ENCODE measurements at regions of chr14 and their contacts with region 1.

Region 1: DNA sequence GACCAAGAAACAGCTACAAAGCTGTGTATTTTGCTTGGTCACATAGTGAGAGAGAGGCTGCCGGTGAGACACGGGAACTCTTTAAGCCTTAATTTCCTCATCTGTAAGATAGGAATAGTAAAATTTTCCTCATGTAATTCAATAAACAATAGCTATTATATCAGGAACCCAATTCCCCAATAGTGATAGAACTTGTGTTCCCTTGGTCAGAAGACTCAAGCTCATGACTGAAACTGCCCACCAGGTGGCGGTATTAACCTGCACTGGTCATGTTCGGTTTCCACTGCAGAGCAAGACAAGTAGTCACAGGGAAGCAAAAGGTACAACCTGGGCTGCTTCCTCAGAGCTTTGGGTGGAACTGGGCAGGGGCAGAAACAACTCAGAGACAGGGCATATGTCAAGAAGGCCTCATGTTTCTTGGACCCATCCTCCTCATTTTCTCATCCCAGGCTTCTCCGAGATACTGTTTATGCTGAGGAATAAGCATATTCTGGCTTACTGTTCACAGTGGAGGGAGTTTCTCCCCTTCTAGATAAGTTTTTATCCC is 4.2 kb upstream of the AJUBA start:
- DNase-seq: peak; percentile 75
- H3K4me3 ChIP-seq: no peak overlapping the region
- H3K27ac ChIP-seq: no peak overlapping the region
- H3K27me3 ChIP-seq: no peaks in the 10 kb centered on the region
- CTCF ChIP-seq: peak; percentile 90

Region 2: GRCh38 chr14:22519877-22520685 is 466.5 kb before region 1 on chr14:
- CTCF ChIA-PET with region 1: no interaction called
- POLR2A ChIA-PET with region 1: no interaction called
- DNase-seq: peak; percentile 45
- H3K4me3 ChIP-seq: peak overlapping the region; percentile 10; the same call in 1 of the 2 replicates
- H3K27ac ChIP-seq: peak overlapping the region; percentile 52
- H3K27me3 ChIP-seq: no peaks in the 10 kb centered on the region
- CTCF ChIP-seq: no peak

Region 3: DNA sequence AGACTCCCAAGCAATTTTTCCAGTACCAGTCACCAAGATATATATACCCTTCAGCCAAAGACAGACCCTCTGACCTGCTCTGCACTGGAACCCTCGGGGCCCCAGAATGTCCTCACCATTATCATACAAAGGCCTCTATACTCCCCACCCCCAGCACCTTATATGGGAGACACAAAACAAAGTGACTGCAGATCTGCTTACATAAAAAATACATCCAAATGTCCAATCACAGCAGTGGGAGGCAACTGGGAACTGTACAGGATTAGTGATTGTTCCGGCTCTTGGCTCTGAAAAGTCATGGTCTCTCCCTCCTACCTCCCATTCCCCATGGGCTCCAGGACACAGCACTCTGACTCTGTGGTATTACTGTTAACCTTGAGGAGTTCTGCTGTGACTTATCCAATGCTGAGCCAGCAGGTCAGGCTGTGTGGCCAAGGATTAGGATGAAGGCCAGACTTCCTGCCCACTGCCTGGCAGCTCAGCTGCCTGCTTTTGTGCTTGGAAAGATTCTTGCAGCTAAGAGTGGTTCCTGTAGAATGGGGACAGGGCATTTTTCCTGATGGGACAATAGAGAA is 206.4 kb before region 1 on chr14:
- CTCF ChIA-PET with region 1: no interaction called
- POLR2A ChIA-PET with region 1: no interaction called
- DNase-seq: no peak
- H3K4me3 ChIP-seq: no peak overlapping the region
- H3K27ac ChIP-seq: no peak overlapping the region
- H3K27me3 ChIP-seq: no peaks in the 10 kb centered on the region
- CTCF ChIP-seq: no peak

Region 4: GRCh38 chr14:22955702-22956569 is 30.6 kb before region 1 on chr14:
- CTCF ChIA-PET with region 1: interaction called, 25 read pairs
- POLR2A ChIA-PET with region 1: interaction called, 3 read pairs
- DNase-seq: no peak
- H3K4me3 ChIP-seq: peak overlapping the region; percentile 66
- H3K27ac ChIP-seq: peak overlapping the region; percentile 68
- H3K27me3 ChIP-seq: no peaks in the 10 kb centered on the region
- CTCF ChIP-seq: no peak

Region 5: GRCh38 chr14:22973217-22974032 is 13.2 kb before region 1 on chr14:
- CTCF ChIA-PET with region 1: interaction called, 181 read pairs
- POLR2A ChIA-PET with region 1: interaction called, 6 read pairs
- DNase-seq: no peak
- H3K4me3 ChIP-seq: no peak overlapping the region
- H3K27ac ChIP-seq: no peak overlapping the region
- H3K27me3 ChIP-seq: no peaks in the 10 kb centered on the region
- CTCF ChIP-seq: peak; percentile 68

Region 6: DNA sequence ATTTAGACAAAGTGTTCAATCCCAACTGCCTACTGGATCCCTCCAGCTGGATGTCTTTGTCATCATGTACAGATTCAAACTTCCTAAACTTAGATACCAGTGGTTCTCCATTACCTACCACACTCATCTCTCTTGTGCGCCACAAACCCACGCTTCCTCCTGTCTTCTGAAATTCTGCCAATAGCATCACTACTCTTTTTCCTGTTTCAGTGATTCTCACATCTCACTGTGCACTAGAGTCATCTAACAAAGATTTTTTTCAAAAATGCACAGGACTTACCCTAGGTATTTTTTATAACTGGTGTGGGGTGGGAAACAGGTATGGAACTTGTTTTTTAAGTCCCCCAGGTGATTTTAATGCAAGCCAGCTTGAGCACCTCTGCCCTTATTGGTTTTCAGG is 42.2 kb after region 1 on chr14:
- CTCF ChIA-PET with region 1: interaction called, 19 read pairs
- POLR2A ChIA-PET with region 1: no interaction called
- DNase-seq: no peak
- H3K4me3 ChIP-seq: no peak overlapping the region
- H3K27ac ChIP-seq: no peak overlapping the region
- H3K27me3 ChIP-seq: no peaks in the 10 kb centered on the region
- CTCF ChIP-seq: no peak

Region 7: DNA sequence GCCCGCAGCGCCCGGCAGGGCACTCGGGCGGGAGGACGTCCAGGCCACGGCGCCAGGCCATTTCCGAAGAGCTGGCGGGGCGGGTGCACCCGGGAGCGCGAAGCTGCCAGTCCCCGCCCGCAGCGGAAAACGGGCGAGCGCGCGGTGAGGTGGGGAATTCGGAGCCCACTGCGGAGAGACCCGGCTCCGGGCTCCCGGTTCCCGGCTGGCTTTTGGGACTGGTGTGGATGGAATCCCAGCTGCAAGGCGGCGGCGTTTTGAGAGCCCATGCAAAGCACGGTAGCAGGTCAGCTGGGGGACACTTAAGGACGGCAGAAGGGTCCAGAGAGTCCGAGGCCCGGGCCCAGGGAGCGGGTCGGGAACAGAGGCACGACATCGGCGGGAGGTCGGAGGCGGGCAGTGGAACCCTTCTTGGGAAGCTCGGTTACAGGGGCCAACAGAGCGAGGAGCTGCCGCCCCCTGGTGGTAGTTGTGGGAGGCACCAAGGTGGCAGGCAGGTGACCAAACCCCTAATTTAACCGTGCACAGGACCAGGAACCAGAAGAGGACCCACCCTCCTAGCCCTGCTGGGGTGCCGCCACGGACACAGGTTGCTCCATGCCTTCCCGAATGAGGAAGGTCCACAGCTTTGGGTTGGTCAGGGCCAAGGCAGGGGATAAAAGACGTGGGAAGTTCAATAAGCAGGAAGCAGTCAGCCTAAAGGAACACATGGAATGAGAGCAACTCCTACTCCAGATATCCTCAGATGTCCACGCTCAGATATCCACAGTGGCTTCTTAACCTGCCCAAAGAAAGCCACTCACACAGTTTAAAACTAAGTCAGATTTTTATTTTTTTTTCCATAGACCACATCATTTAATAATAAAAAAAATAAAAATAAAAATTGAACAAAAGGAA is 71.4 kb after region 1 on chr14:
- CTCF ChIA-PET with region 1: interaction called, 262 read pairs
- POLR2A ChIA-PET with region 1: interaction called, 17 read pairs
- DNase-seq: peak; percentile 45
- H3K4me3 ChIP-seq: peak overlapping the region; percentile 61
- H3K27ac ChIP-seq: peak overlapping the region; percentile 52
- H3K27me3 ChIP-seq: no peaks in the 10 kb centered on the region
- CTCF ChIP-seq: peak; percentile 96

Region 8: GRCh38 chr14:23095196-23096108 is 108.9 kb after region 1 on chr14 and contains the start of gene C14orf119:
- CTCF ChIA-PET with region 1: interaction called, 14 read pairs
- POLR2A ChIA-PET with region 1: interaction called, 10 read pairs
- DNase-seq: peak; percentile 99
- H3K4me3 ChIP-seq: peak within 1 kb of the TSS; percentile 95
- H3K27ac ChIP-seq: peak within 1 kb of the TSS; percentile 99
- H3K27me3 ChIP-seq: no peaks in the 10 kb centered on the region
- CTCF ChIP-seq: no peak
- polyA plus RNA-seq, gene C14orf119: 119 and 128 TPM in 2 replicates

Region 9: GRCh38 chr14:23114669-23115491 is 128.3 kb after region 1 on chr14:
- CTCF ChIA-PET with region 1: interaction called, 81 read pairs
- POLR2A ChIA-PET with region 1: no interaction called
- DNase-seq: peak; percentile 89
- H3K4me3 ChIP-seq: peak overlapping the region; percentile 17; the same call in 1 of the 2 replicates
- H3K27ac ChIP-seq: peak overlapping the region; percentile 91
- H3K27me3 ChIP-seq: no peaks in the 10 kb centered on the region
- CTCF ChIP-seq: peak; percentile 16

Measured in AG04450 (cell line).